Activated CD4-positive, alpha-beta T cell treated with anti-CD3 and anti-CD28 coated beads for 36 hours (primary cell): ENCODE measurements at regions of chr10 and their contacts with region 1.

Region 1: GRCh38 chr10:33248638-33249037 is 85.8 kb downstream of the NRP1 start:
- DNase-seq: peak; percentile 30
- ATAC-seq: peak; percentile 83
- H3K4me3 Mint-ChIP-seq: no peak overlapping the region
- H3K27ac Mint-ChIP-seq: peak overlapping the region; percentile 39
- H3K4me1 Mint-ChIP-seq: peaks cover 71% of the 10 kb centered on the region
- H3K27me3 Mint-ChIP-seq: peaks cover 12% of the 10 kb centered on the region

Region 2: DNA sequence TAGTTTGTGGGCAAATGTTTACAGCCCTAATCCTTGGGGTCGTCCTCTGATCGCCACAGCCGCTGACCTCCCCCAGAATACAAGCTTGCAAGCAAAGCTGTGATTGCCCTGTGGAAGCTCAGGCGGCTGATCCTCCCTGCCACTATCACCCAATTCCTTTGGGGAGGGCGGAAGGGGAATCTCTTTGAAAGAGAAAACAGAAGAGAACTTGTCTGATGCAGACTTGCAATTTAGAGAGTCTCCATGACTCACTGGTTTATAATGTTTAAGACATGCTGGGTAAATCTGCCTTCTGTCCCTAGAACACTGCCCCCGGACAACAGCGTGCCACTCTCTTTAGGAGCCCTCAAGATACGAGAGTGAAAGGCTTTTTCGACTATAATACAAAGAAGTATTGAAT is 10.3 kb after region 1 on chr10:
- CTCF ChIA-PET with region 1: interaction called, 4 read pairs
- POLR2A ChIA-PET with region 1: no interaction called
- intact Hi-C with region 1: loop called (anchors 1 to 2 kb)
- DNase-seq: no peak
- ATAC-seq: no peak
- H3K4me3 Mint-ChIP-seq: no peak overlapping the region
- H3K27ac Mint-ChIP-seq: no peak overlapping the region
- H3K4me1 Mint-ChIP-seq: peaks cover 6% of the 10 kb centered on the region
- H3K27me3 Mint-ChIP-seq: peaks cover 49% of the 10 kb centered on the region

Region 3: DNA sequence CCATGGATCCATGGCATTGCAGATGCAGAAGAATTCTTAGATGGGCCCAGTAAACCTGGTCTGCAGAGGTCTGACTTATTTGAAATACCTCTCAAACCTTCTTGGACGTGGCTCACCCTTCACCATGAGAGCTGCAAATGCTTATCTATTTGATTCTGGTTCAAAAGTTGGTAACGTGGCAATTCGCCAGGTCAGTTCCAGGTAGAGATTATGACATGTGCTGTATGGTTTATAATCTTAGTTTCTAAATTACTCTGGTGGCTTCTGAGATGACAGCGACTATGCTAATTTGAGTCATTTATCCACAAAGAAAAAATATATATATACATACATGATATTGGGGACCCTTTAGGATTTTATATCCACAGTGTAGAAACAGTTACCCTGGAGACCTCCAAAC is 17.0 kb after region 1 on chr10:
- CTCF ChIA-PET with region 1: interaction called, 4 read pairs
- POLR2A ChIA-PET with region 1: no interaction called
- intact Hi-C with region 1: loop called (anchors 1 kb)
- DNase-seq: peak; percentile 84
- ATAC-seq: peak; percentile 47
- H3K4me3 Mint-ChIP-seq: no peak overlapping the region
- H3K27ac Mint-ChIP-seq: no peak overlapping the region
- H3K4me1 Mint-ChIP-seq: peaks cover 22% of the 10 kb centered on the region
- H3K27me3 Mint-ChIP-seq: peaks cover 29% of the 10 kb centered on the region